Dorsolateral prefrontal cortex (tissue), 120 donors: ENCODE measurements at regions of chr1 and their contacts with region 1.

Region 1: DNA sequence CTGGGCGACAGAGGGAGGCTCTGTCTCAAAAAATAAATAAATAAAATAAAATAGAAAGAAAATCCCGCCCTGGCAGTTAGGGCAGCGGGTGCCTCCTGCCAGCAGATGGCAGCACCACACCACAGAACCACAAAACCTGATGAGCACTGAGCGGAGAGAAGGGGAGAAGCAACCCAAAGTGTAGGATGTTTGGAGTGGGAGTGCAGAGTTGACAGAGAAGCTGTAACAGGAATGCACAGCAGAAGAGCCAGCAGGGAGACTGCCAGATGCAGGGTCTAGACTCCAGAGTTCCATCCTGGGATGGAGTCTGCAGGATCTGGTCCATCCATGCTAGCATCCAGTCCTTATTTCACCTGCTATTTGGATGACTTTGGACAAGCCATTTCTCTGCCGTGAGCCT is 29.7 kb upstream of the KIRREL1 start:
- DNase-seq: peak; percentile 12 to 81 (median 68)
- H3K4me3 ChIP-seq: peak overlapping the region in 1 of 59 donors; percentile 17
- H3K27ac ChIP-seq: no peak overlapping the region
- H3K27me3 ChIP-seq: peaks cover 0 to 18% (median 0%) of the 10 kb centered on the region in 45 donors
- CTCF ChIP-seq: peak; percentile 87 to 99 (median 96)

Region 2: GRCh38 chr1:157910270-157910669 is 53.4 kb before region 1 on chr1:
- intact Hi-C with region 1: no loop called
- DNase-seq: no peak
- H3K4me3 ChIP-seq: no peak overlapping the region
- H3K27ac ChIP-seq: no peak overlapping the region
- H3K27me3 ChIP-seq: no peaks in the 10 kb centered on the region
- CTCF ChIP-seq: no peak

Region 3: DNA sequence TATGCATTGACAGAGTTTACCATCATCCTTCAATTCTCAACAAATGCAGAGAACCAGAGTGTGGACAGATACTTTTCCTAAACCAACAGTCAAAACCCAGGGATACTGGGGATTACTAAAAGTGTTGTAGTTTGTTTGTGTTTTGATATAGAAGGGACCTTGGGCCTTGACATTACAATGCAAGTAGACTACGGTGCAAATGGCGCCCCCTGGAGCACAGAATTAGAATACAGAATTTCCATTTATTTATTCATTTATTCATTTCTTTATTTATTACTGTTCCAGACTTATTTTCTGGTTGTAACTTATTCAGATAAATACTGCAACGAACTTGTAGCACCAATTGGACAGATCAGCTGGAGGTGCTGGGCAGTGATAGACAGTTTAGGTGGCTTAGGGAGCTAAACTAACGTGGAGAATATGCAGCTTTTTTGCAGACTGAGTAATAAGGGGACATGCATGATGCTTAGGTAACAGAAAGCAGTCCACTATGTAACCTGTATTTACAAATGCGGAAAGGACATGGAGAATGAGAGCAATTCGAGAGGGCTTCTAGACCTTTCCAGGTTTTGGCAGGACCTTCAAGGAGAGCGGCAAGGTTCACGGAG is 72.4 kb after region 1 on chr1:
- intact Hi-C with region 1: loop called in 1 of 2 experiments (anchors 2 kb)
- DNase-seq: no peak
- H3K4me3 ChIP-seq: no peak overlapping the region
- H3K27ac ChIP-seq: no peak overlapping the region
- H3K27me3 ChIP-seq: peaks cover 0 to 13% (median 0%) of the 10 kb centered on the region in 45 donors
- CTCF ChIP-seq: peak in 54 of 56 donors; percentile 42 to 78 (median 64)

Region 4: DNA sequence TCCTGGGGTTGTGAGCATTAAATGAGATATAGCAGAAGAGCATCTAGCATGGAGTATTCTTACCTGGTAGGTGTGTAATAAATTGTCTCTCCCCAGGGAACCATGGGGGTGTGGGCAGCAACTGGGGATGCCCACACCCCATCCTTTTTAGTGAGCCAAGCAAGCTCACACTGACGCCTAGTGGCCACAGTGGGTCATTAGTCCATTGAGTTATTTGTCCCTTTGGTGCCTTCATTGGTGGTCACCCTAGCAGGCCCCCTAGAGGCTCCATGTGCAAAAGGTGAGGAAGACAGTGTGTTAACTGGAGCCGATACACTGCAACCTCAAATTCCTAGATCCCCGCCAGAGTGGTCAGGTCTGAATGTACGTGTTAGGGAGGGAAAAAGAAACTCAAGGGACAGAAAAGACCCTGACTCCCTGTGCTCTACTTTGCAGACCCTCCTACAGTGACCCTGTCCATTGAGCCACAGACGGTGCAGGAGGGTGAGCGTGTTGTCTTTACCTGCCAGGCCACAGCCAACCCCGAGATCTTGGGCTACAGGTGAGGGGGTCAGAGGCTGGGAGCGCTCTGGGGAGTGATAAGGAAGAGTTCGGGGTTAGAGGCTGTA is 123.7 kb after region 1 on chr1:
- intact Hi-C with region 1: loop called in 1 of 2 experiments (anchors 5 kb)
- DNase-seq: peak in 3 of 10 donors; percentile 22 to 40 (median 24)
- H3K4me3 ChIP-seq: no peak overlapping the region
- H3K27ac ChIP-seq: no peak overlapping the region
- H3K27me3 ChIP-seq: peaks cover 0 to 7% (median 0%) of the 10 kb centered on the region in 45 donors
- CTCF ChIP-seq: peak; percentile 37 to 85 (median 74)

Region 5: GRCh38 chr1:158124999-158125398 is 161.3 kb after region 1 on chr1:
- intact Hi-C with region 1: loop called (anchors 2 kb)
- DNase-seq: peak; percentile 41 to 94 (median 82)
- H3K4me3 ChIP-seq: no peak overlapping the region
- H3K27ac ChIP-seq: no peak overlapping the region
- H3K27me3 ChIP-seq: peaks cover 0 to 11% (median 0%) of the 10 kb centered on the region in 45 donors
- CTCF ChIP-seq: peak; percentile 40 to 98 (median 93)

Region 6: GRCh38 chr1:159009704-159010361 is 1046.1 kb after region 1 on chr1 and contains the start of gene IFI16:
- intact Hi-C with region 1: loop called in 1 of 2 experiments (anchors 10 kb)
- DNase-seq: no peak
- H3K4me3 ChIP-seq: peak within 1 kb of the TSS; percentile 24 to 69 (median 55)
- H3K27ac ChIP-seq: peak within 1 kb of the TSS; percentile 18 to 93 (median 82)
- H3K27me3 ChIP-seq: no peaks in the 10 kb centered on the region
- CTCF ChIP-seq: peak in 1 of 56 donors; percentile 15
- total RNA-seq, gene IFI16: 9.8 to 75.4 (median 24.4) TPM

Region 7: GRCh38 chr1:159071970-159072582 is 1108.4 kb after region 1 on chr1:
- intact Hi-C with region 1: loop called in 1 of 2 experiments (anchors 10 kb)
- DNase-seq: no peak
- H3K4me3 ChIP-seq: no peak overlapping the region
- H3K27ac ChIP-seq: no peak overlapping the region
- H3K27me3 ChIP-seq: peaks cover 0 to 5% (median 0%) of the 10 kb centered on the region in 45 donors
- CTCF ChIP-seq: peak; percentile 43 to 92 (median 82)